H1 (cell line): ENCODE measurements at regions of chr4 and their contacts with region 1.

Region 1: DNA sequence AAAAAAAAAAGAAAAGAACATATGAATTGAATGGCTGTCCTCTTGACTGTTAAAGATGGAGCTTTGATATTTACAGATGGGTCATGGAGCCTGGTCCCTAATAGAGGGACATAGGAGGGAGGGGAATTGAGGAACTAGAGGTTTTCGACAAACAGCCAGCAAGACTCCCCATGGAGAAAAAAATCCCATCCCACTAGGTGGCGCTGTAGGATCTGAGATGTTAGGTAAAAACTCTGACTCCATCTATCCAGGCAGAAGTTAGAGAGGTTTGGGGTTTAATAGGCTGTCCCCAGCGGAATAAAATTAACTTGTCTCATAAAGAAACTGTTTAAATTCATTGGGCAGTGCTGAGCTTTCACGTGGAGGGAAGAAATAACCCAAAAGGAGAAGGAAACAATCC is 45.9 kb downstream of the HMGB2 start:
- DNase-seq: peak; percentile 31 to 91
- H3K4me3 ChIP-seq: no peak overlapping the region
- H3K27ac ChIP-seq: no peak overlapping the region
- H3K4me1 ChIP-seq: 0 out of 7 replicates have a peak, but pooled peaks cover 0 to 1% (median 0%) of the 10 kb centered on the region in 4 experiments
- H3K27me3 ChIP-seq: peaks cover 0 to 1% (median 0%) of the 10 kb centered on the region in 4 experiments; a peak in 1 of 7 replicates
- CTCF ChIP-seq: peak; percentile 19 to 73 (median 68)
- EP300 ChIP-seq: no peak
- POLR2A ChIP-seq: no peak
- RAD21 ChIP-seq: peak; percentile 66 to 72

Region 2: DNA sequence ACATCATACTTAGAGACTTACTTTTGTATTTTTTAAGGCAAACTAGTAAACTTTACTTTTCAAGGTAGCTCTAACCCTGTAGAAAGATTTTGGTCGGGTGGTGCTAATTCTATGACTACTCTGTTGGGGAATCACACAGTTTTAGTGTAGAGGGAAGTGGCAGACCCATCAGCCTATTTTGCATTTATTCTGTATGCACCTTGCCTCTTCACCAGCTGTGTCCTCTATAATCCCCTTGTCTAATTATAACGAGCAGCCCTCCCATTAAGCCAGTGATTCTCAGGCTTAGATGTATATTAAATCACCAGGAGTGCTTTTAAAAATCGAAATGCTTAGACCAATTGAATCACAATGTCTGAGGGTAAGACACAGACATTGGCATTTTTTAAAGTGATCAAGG is 41.6 kb before region 1 on chr4:
- CTCF ChIA-PET with region 1: no interaction called
- POLR2A ChIA-PET with region 1: no interaction called
- DNase-seq: no peak
- H3K4me3 ChIP-seq: peak overlapping the region in 1 of 4 experiments; percentile 13; a peak in 1 of 8 replicates
- H3K27ac ChIP-seq: no peak overlapping the region
- H3K4me1 ChIP-seq: peaks cover 1 to 30% (median 17%) of the 10 kb centered on the region in 4 experiments
- H3K27me3 ChIP-seq: no peaks in the 10 kb centered on the region; a peak in 1 of 7 replicates
- CTCF ChIP-seq: no peak
- EP300 ChIP-seq: no peak
- POLR2A ChIP-seq: 0 out of 3 replicates have a peak, but pooled peaks of 1 of the 2 experiments have one; percentile 26
- RAD21 ChIP-seq: no peak

Region 3: GRCh38 chr4:173270312-173271027 is 17.8 kb before region 1 on chr4:
- CTCF ChIA-PET with region 1: interaction called, 15 read pairs
- POLR2A ChIA-PET with region 1: no interaction called
- DNase-seq: no peak
- H3K4me3 ChIP-seq: no peak overlapping the region
- H3K27ac ChIP-seq: no peak overlapping the region
- H3K4me1 ChIP-seq: peaks cover 0 to 5% (median 1%) of the 10 kb centered on the region in 4 experiments; a peak in 3 of 7 replicates
- H3K27me3 ChIP-seq: no peaks in the 10 kb centered on the region; a peak in 1 of 7 replicates
- CTCF ChIP-seq: no peak
- EP300 ChIP-seq: no peak
- POLR2A ChIP-seq: no peak
- RAD21 ChIP-seq: no peak

Region 4: GRCh38 chr4:173466101-173466500 is 177.8 kb after region 1 on chr4:
- CTCF ChIA-PET with region 1: no interaction called
- POLR2A ChIA-PET with region 1: no interaction called
- DNase-seq: no peak
- H3K4me3 ChIP-seq: no peak overlapping the region
- H3K27ac ChIP-seq: no peak overlapping the region
- H3K4me1 ChIP-seq: no peaks in the 10 kb centered on the region; a peak in 1 of 7 replicates
- H3K27me3 ChIP-seq: no peaks in the 10 kb centered on the region
- CTCF ChIP-seq: no peak
- EP300 ChIP-seq: no peak
- POLR2A ChIP-seq: no peak
- RAD21 ChIP-seq: no peak